Common myeloid progenitor, CD34-positive (primary cell): ENCODE measurements at regions of chr2 and their contacts with region 1.

Region 1: DNA sequence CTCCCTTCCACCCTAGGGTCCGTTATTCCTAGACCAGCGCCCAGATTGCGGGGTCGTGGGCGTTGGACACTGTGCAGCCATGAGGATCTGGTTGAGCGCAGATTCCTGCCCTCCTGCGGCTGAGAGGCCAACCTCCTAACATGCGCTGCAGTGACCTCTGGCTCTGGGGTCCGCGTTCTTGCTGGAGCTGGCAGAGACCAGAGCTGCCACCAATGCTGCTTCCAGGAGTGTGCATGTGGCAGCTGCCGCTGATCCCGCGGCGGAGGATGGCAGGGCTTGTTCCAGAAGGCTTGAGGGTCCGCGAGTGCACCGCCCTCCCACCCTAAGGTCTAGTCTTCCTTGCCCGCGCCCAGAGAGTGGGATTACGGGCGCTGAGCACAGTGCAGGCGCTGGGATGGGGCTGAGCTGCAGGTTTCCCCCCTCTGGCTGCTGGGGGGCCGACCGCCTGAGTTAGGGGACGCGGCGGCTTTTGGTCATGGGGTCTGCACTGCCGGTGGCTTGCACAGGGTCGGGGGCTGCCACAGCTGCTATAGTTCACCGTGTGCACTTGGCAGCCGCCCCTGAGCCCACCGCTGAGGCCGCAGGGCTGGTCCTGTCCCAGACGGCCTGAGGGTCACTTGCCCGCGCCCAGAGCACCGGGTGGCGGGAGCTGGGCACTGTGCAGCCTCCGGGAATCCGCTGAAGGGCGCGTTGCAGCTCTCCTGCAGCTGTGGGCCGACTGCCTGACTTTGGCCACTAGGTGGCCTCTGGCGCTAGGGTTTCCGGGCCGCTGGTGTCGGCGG is 145.9 kb downstream of the CCDC74A start:
- DNase-seq: peak; percentile 45 to 67 (median 61)
- H3K4me3 ChIP-seq: peak overlapping the region in 6 of 7 experiments; percentile 7 to 74 (median 48)
- H3K27ac ChIP-seq: no peak overlapping the region
- H3K4me1 ChIP-seq: peaks cover 0 to 18% (median 15%) of the 10 kb centered on the region in 4 experiments
- H3K27me3 ChIP-seq: peaks cover 4 to 38% (median 8%) of the 10 kb centered on the region in 5 experiments

Region 2: DNA sequence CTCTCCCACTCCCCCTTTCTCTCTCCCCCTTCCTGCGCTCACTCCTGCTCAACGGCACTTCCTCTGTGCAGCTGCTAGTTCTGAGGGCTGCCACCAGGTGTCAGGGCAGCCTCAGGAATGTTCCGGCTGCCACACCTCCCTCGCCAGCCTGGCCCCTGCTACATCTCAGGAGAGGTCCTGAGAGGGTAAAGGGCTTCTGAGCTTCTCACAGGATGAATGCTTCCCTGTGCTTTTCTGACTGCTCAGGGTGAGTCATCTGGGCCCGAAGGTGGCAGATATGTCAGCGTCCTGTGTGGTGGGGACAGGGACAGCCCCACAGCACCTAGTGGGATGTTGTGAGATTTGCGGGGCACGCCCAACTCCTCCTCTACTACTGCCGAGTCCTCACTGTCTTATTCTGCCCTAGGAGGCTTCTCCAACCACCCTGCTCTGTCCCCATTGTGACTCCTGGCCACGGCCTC is 519.5 kb before region 1 on chr2:
- CTCF ChIA-PET with region 1: interaction called, 25 read pairs
- POLR2A ChIA-PET with region 1: no interaction called
- DNase-seq: peak; percentile 52 to 76 (median 74)
- H3K4me3 ChIP-seq: no peak overlapping the region
- H3K27ac ChIP-seq: no peak overlapping the region
- H3K4me1 ChIP-seq: no peaks in the 10 kb centered on the region
- H3K27me3 ChIP-seq: no peaks in the 10 kb centered on the region

Region 3: GRCh38 chr2:131413148-131413747 is 260.3 kb before region 1 on chr2:
- CTCF ChIA-PET with region 1: interaction called, 15 read pairs
- POLR2A ChIA-PET with region 1: no interaction called
- DNase-seq: peak; percentile 67 to 84 (median 79)
- H3K4me3 ChIP-seq: no peak overlapping the region
- H3K27ac ChIP-seq: no peak overlapping the region
- H3K4me1 ChIP-seq: no peaks in the 10 kb centered on the region
- H3K27me3 ChIP-seq: peaks cover 9 to 29% (median 14%) of the 10 kb centered on the region in 5 experiments

Region 4: DNA sequence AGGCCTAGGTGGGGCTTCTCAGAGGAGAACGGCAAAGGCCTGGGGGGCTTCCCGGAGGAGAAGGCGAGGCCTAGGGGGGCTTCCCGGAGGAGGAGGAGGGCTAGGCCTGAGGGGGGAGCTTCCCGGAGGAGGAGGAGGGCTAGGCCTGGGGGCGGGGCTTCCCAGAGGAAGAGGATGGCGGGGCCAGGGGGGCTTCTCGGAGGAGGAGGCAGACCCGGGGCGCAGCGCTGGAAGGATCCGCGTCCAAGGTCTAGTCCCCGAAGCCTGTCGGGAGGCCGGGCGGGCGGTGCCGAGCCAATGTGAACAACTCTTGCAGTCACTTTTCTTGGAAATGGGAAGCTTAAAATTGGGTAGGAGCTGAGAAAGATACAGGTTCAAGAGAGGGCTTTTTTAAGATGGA is 227.7 kb before region 1 on chr2:
- CTCF ChIA-PET with region 1: no interaction called
- POLR2A ChIA-PET with region 1: no interaction called
- DNase-seq: no peak
- H3K4me3 ChIP-seq: no peak overlapping the region
- H3K27ac ChIP-seq: no peak overlapping the region
- H3K4me1 ChIP-seq: no peaks in the 10 kb centered on the region
- H3K27me3 ChIP-seq: no peaks in the 10 kb centered on the region

Region 5: GRCh38 chr2:131635611-131636010 is 38.0 kb before region 1 on chr2:
- CTCF ChIA-PET with region 1: no interaction called
- POLR2A ChIA-PET with region 1: no interaction called
- DNase-seq: no peak
- H3K4me3 ChIP-seq: no peak overlapping the region
- H3K27ac ChIP-seq: no peak overlapping the region
- H3K4me1 ChIP-seq: no peaks in the 10 kb centered on the region
- H3K27me3 ChIP-seq: no peaks in the 10 kb centered on the region

Region 6: GRCh38 chr2:131656816-131657642 is 16.6 kb before region 1 on chr2:
- CTCF ChIA-PET with region 1: no interaction called
- POLR2A ChIA-PET with region 1: no interaction called
- DNase-seq: no peak
- H3K4me3 ChIP-seq: no peak overlapping the region
- H3K27ac ChIP-seq: no peak overlapping the region
- H3K4me1 ChIP-seq: no peaks in the 10 kb centered on the region
- H3K27me3 ChIP-seq: peaks cover 0 to 11% (median 0%) of the 10 kb centered on the region in 5 experiments

Region 7: DNA sequence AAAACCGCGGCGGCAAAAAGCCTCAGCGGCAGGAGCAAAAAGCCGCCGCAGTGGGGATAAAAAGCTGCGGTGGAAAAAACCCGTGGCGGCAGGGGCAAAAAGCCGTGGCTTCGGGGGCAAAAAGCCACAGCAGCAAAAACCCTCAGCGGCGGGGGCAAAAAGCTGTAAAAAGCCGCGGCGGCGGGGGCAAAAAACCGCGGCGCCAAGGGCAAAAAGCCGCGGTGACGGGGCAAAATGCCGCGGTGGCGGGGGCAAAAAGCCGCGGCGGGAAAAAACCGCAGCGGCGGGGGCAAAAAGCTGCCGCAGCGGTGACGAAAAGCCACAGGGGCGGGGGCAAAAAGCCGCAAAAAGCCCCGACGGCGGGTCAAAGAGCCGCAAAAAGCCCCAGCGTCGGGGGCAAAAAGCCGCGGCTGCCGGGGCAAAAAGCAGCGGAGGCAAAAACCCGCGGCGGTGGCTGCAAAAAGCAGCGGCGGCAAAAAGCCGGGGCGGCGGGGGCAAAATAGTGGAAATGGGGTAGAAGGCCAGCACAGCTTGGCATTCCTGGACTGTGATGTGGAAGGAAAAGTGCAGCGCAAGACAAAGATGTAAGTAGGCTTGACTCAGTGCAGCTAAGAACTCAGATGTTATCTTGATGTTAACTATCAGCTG is 336.4 kb after region 1 on chr2:
- CTCF ChIA-PET with region 1: no interaction called
- POLR2A ChIA-PET with region 1: no interaction called
- DNase-seq: peak; percentile 9 to 45 (median 39)
- H3K4me3 ChIP-seq: peak overlapping the region in 1 of 7 experiments; percentile 2
- H3K27ac ChIP-seq: no peak overlapping the region
- H3K4me1 ChIP-seq: no peaks in the 10 kb centered on the region
- H3K27me3 ChIP-seq: peaks cover 2 to 25% (median 3%) of the 10 kb centered on the region in 5 experiments